HEK293 (cell line): ENCODE measurements at regions of chr14 and their contacts with region 1.

Region 1: DNA sequence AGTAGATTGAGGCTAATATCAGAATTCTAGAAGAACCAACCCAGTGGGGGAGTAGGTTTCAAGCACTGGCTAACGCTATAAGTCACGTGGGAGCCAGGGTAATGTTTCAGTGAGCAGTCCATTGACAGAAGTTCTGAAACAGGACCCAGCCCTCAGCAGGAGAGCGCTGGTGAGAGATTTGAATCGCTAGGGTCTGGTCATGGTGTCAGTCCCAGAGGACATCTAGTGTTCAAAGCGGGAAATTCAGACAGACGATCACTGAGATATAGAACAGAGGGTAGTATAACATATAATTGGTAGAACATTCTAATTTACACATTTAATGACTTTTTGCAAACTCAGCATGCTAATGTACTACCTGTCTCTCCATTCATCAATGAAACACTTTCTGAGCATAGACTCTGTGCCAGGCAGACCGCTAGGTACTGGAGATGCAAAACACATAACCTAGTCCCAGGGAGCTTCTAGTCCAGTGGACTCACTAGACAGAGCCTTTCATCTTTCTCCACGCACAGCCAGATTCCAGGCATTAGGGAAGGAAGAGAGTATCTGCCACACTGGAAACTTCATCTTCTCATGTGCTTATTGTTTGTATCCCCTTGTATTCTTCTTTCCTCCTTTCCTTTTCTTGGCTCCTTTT is 35.4 kb upstream of the RNASE3 start:
- H3K4me3 ChIP-seq: no peak overlapping the region
- H3K27ac ChIP-seq: no peak overlapping the region
- H3K4me1 ChIP-seq: no peaks in the 10 kb centered on the region
- CTCF ChIP-seq: 0 out of 2 replicates have a peak, but pooled peaks have one; percentile 21

Region 2: DNA sequence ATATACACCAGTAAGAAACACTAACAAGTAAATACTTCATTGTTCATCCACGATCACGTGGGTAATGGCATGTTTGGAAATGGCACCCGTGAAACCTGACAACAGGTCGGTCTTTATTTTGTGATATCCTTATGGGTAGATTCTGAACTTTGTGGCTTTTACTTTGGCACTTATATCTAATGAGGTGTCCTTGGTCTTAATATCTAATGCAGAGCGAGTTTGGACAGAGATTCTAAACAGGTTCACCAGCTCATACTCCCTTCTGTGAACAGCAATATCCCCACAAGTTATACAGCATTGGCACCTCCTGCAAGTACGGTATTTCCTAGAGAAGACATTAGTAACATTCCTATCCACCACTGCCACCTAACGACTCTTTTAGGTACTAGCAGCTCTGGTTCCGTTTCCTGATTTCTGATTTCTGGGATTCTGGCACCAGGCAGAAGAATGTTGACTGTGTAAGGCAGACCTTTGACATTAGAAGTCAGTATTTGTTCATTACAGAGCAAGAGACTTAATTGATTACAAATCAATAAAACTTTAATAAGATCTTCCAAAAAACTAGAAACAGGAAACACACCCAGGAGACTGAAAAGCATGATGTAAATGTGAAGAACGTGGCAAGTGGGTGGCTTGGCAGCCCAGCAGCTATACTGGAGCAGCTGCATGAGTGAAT is 164.8 kb before region 1 on chr14:
- CTCF ChIA-PET with region 1: interaction called, 44 read pairs
- POLR2A ChIA-PET with region 1: no interaction called
- H3K4me3 ChIP-seq: no peak overlapping the region
- H3K27ac ChIP-seq: no peak overlapping the region
- H3K4me1 ChIP-seq: no peaks in the 10 kb centered on the region
- CTCF ChIP-seq: peak; percentile 53

Region 3: GRCh38 chr14:20697273-20698017 is 158.3 kb before region 1 on chr14:
- CTCF ChIA-PET with region 1: interaction called, 44 read pairs
- POLR2A ChIA-PET with region 1: no interaction called
- H3K4me3 ChIP-seq: no peak overlapping the region
- H3K27ac ChIP-seq: no peak overlapping the region
- H3K4me1 ChIP-seq: no peaks in the 10 kb centered on the region
- CTCF ChIP-seq: peak; percentile 76

Region 4: DNA sequence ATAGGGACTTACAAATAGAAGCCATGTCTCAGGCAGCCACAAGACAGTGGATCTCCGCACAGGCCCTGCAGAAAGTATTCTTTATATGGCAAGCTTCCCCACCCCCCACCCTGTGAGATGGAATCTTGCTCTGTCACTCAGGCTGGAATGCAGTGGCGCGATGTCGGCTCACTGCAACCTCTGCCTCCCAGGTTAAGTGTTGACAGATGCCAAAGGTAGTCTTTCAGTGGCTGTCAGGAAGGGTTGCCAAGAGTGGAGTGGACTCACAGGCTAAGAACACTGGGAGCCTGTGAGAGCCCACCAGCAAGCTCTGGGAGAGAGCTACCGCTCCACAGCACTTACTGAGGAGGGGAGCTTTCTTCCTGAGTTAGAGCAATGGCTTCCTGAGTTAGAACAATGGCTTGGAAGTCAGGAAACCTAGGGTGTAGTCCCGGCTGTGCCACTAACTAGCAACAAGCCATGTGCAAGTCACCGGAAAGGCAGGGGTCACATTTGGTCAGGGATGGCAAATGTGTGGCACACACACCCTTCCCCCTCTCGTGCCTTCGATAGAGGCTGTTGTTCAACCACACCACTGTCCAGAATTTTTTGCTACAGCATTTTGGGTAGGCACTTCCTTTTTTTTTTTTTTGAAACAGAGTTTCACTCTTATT is 55.8 kb before region 1 on chr14:
- CTCF ChIA-PET with region 1: no interaction called
- POLR2A ChIA-PET with region 1: no interaction called
- H3K4me3 ChIP-seq: no peak overlapping the region
- H3K27ac ChIP-seq: no peak overlapping the region
- H3K4me1 ChIP-seq: no peaks in the 10 kb centered on the region
- CTCF ChIP-seq: no peak

Region 5: DNA sequence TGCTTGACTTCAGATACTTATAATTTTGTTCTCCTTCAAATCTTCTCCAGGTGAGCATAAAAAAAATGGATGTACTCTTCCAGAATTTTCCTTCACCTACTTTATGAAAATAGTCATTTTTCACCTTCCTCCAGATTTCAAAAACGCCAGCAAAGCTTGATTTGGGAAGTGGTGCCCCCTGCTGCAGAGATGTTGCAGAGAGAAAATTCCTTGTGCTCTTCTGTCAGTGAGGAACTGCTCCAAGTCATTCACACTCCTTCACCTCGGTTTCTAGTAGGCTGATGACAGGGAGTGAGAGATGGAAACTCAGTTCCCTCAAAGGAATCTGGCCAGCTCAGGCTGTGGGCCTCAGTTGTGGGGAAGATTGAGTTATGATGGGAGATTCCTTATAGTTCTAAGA is 11.2 kb after region 1 on chr14:
- CTCF ChIA-PET with region 1: interaction called, 41 read pairs
- POLR2A ChIA-PET with region 1: interaction called, 5 read pairs
- H3K4me3 ChIP-seq: no peak overlapping the region
- H3K27ac ChIP-seq: no peak overlapping the region
- H3K4me1 ChIP-seq: no peaks in the 10 kb centered on the region
- CTCF ChIP-seq: no peak

Region 6: GRCh38 chr14:20873370-20874177 is 17.8 kb after region 1 on chr14:
- CTCF ChIA-PET with region 1: interaction called, 41 read pairs
- POLR2A ChIA-PET with region 1: interaction called, 5 read pairs
- H3K4me3 ChIP-seq: no peak overlapping the region
- H3K27ac ChIP-seq: no peak overlapping the region
- H3K4me1 ChIP-seq: no peaks in the 10 kb centered on the region
- CTCF ChIP-seq: peak; percentile 41; the same call in 1 of the 2 replicates